ENCODE measurements at regions of chr15 and their contacts with region 1.

Region 1: DNA sequence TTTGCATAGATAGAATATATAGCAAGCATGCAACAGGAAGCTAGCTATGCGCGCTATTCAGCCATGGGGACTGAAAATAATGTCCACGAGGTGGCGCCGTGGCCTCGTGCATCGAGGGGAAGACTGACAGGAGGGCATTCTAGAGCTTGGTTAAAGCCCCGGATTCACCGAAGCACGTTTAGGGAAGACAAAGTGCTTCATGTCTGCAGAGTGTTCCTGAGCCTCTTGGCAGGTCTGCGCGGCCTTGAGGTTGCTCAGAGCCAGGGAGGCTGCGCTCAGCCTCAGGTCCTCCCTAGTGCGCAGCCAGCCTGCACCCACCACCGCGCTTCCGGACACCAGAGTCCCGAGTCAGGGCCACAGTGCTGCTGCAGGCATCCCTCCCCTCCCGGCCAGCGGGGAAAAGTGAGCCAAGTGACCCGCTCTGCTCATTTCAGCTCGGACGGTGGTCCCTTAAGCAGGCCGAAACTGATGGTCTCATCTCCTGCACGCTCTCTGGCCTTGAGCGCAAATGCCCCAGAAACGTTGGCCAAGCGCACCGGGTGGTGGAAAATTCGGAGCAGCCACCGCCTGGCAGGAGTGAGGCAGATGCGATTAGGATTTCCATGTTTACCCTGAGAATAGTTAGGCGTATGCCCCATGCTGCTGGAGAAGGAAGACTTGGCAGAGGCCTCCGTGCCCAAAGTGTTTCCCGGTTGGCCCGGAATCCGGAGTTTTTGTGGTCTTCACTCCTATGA is 24.8 kb downstream of the GABRA5 start:
- DNase-seq: peak; percentile 63
- H3K4me3 Mint-ChIP-seq: no peak overlapping the region
- H3K27ac Mint-ChIP-seq: no peak overlapping the region
- H3K4me1 Mint-ChIP-seq: no peaks in the 10 kb centered on the region
- H3K27me3 Mint-ChIP-seq: peaks cover 12% of the 10 kb centered on the region

Region 2: GRCh38 chr15:27017168-27017809 is 125.7 kb after region 1 on chr15:
- CTCF ChIA-PET with region 1: interaction called, 11 read pairs
- DNase-seq: peak; percentile 53
- H3K4me3 Mint-ChIP-seq: no peak overlapping the region
- H3K27ac Mint-ChIP-seq: no peak overlapping the region
- H3K4me1 Mint-ChIP-seq: no peaks in the 10 kb centered on the region
- H3K27me3 Mint-ChIP-seq: no peaks in the 10 kb centered on the region

Measured in activated naive CD4-positive, alpha-beta T cell treated with anti-CD3 and anti-CD28 coated beads, Interleukin-2, amount 10 ng/mL, durations not matched to agents 7 days and 5 days (primary cell).